K562 (cell line): ENCODE measurements at regions of chr4 and their contacts with region 1.

Region 1: DNA sequence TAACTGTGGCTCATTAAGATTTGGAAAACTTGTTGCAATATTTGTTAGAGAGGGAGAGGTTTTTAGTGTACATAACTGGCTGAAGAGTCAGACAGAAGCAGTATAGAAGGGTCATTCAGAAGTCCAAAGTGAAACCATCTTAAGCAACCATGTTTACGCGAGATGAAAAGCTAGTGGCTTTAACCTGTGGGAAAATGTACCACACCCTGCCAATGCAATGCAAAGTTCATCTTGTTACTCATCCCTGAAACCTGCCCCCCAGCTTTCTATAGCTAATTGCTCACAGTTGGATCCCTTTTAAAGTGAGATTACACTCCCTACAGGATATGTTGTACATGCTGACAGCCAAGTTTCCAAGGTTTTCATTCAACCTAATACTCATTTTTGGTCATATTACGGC is 96.7 kb upstream of the RAPGEF2 start:
- DNase-seq: no peak
- ATAC-seq: no peak
- H3K4me3 ChIP-seq: no peak overlapping the region
- H3K27ac ChIP-seq: no peak overlapping the region
- H3K4me1 ChIP-seq: peaks cover 6 to 37% of the 10 kb centered on the region in 2 experiments; a peak in 4 of 5 replicates
- H3K27me3 ChIP-seq: no peaks in the 10 kb centered on the region
- CTCF ChIP-seq: no peak
- EP300 ChIP-seq: no peak
- POLR2A ChIP-seq: no peak
- RAD21 ChIP-seq: no peak

Region 2: DNA sequence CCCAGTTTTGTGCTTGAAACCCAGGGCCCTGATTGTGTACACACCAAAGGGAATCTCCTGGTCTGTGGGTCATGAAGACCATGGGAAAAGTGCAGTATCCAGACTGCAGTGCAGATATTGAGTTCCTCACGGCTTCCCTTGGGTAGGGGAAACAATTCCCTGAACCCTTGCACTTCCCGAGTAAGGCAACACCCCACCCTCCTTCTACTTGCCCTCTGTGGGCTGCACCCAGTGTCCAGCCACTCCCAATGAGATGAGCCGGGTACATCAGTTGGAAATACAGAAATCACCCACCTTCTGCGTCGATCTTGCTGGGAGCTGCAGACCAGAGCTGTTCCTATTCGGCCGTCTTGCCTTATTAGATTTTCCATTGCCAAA is 103.1 kb before region 1 on chr4:
- CTCF ChIA-PET with region 1: no interaction called
- POLR2A ChIA-PET with region 1: no interaction called
- in situ Hi-C with region 1: no loop called
- intact Hi-C with region 1: loop called (anchors 5 kb)
- DNase-seq: no peak
- ATAC-seq: peak; percentile 52
- H3K4me3 ChIP-seq: no peak overlapping the region
- H3K27ac ChIP-seq: peak overlapping the region; percentile 83
- H3K4me1 ChIP-seq: peaks cover 7 to 13% of the 10 kb centered on the region in 2 experiments; a peak in 4 of 5 replicates
- H3K27me3 ChIP-seq: no peaks in the 10 kb centered on the region
- CTCF ChIP-seq: no peak
- EP300 ChIP-seq: no peak
- POLR2A ChIP-seq: no peak
- RAD21 ChIP-seq: no peak